GM10248 (cell line): ENCODE measurements at regions of chr17 and their contacts with region 1.

Region 1: DNA sequence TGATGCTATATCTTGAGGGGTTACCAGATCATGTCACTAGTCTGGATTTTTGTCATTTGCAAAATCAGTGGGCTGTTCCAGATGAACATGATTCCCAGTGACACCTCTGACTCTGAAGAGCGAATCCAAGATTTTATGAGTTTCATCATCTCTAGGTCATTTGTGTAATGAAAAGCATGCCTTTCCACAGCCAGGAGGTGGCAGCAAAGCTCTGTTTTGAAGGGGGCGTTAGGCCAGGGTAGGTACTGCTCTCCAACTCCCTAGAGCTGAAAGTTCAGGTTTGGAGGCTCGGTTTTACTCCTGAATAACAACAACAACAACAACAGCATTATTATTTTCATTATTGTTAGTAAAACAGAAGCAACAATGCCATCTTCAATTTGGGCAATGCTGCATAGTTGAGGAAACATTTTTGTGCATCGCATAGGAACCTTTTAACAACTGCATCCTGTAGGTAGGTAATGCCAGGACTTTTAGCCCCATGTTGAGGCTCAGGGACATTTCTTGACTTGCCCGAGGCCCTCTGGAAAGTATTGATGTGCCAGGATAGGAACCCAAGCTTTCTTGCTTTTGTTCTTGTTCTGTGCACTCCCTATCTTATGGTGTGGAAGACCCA is 77.0 kb downstream of the MYH13 start:
- DNase-seq: peak; percentile 62
- CTCF ChIP-seq: peak; percentile 82

Region 2: GRCh38 chr17:10251212-10251948 is 44.5 kb before region 1 on chr17:
- CTCF ChIA-PET with region 1: no interaction called
- POLR2A ChIA-PET with region 1: no interaction called
- DNase-seq: peak; percentile 49
- CTCF ChIP-seq: no peak

Region 3: GRCh38 chr17:10309003-10309834 is 13.4 kb after region 1 on chr17:
- CTCF ChIA-PET with region 1: interaction called, 14 read pairs
- POLR2A ChIA-PET with region 1: no interaction called
- DNase-seq: no peak
- CTCF ChIP-seq: no peak

Region 4: DNA sequence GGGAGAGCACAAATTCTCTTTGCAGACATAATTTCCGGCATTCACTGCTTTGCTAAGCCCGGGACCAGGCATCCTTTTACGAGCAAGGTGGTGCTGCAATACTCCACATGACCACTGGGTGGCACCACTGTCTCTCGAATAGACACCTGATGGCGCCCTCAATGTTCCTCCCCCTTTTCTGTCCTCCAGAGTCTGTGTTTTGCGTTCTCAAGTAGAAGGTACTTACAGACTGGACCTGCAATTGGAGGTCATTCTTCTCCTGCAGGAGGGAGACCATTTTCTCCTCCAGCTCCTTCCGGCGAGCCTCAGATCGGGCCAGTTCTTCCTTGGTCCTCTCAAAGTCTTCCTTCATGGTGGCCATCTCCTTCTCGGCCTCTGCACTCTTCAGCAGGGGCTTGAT is 31.8 kb after region 1 on chr17:
- CTCF ChIA-PET with region 1: interaction called, 11 read pairs
- POLR2A ChIA-PET with region 1: no interaction called
- DNase-seq: peak; percentile 85
- CTCF ChIP-seq: peak; percentile 86

Region 5: DNA sequence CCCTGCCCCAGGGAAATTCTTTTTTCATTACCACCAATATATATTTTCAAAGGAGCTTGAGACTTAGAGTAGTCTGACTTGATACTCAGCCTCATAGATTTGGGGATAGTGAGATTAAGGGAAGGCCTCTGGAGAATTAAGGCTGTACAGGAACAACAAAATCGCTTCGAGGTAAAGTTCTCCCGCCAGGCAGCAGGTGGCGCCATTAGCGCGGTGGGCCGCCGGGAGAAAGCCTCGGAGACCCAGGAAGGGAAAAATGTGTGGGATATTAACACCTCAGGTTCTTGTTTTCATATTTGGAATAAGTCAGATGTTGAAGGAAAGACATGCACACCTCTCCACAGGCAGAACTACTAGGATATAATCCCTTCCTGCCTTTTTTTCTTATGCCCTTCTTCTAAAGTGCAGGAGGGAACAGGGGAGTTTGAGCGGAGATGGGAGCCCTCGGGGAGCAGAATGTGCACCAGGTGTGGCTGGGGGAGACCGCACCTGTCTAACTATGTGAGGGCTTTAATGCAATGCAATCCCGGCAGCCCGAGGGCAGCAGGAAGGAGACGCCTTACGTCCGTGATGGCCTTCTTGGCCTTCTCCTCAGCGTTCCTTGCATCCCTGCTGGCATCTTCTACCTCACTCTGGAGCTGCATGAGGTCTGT is 335.3 kb after region 1 on chr17:
- CTCF ChIA-PET with region 1: interaction called, 11 read pairs
- POLR2A ChIA-PET with region 1: no interaction called
- DNase-seq: peak; percentile 53
- CTCF ChIP-seq: peak; percentile 83